ENCODE measurements at regions of chr2 and their contacts with region 1.

Region 1: GRCh38 chr2:200667413-200667812 is 81.6 kb downstream of the AOX1 start:
- DNase-seq: no peak
- ATAC-seq: no peak
- H3K4me3 ChIP-seq: no peak overlapping the region
- H3K4me3 Mint-ChIP-seq: no peak overlapping the region
- H3K27ac ChIP-seq: no peak overlapping the region
- H3K27ac Mint-ChIP-seq: no peak overlapping the region
- H3K4me1 ChIP-seq: no peaks in the 10 kb centered on the region
- H3K4me1 Mint-ChIP-seq: no peaks in the 10 kb centered on the region
- H3K27me3 ChIP-seq: no peaks in the 10 kb centered on the region
- H3K27me3 Mint-ChIP-seq: no peaks in the 10 kb centered on the region
- CTCF ChIP-seq: no peak

Region 2: GRCh38 chr2:200749631-200750322 is 82.4 kb after region 1 on chr2:
- CTCF ChIA-PET with region 1: no interaction called
- POLR2A ChIA-PET with region 1: no interaction called
- intact Hi-C with region 1: loop called in 1 of 2 experiments (anchors 5 kb)
- DNase-seq: no peak
- ATAC-seq: no peak
- H3K4me3 ChIP-seq: no peak overlapping the region
- H3K4me3 Mint-ChIP-seq: no peak overlapping the region
- H3K27ac ChIP-seq: no peak overlapping the region
- H3K27ac Mint-ChIP-seq: no peak overlapping the region
- H3K4me1 ChIP-seq: no peaks in the 10 kb centered on the region
- H3K4me1 Mint-ChIP-seq: no peaks in the 10 kb centered on the region
- H3K27me3 ChIP-seq: no peaks in the 10 kb centered on the region
- H3K27me3 Mint-ChIP-seq: peaks cover 18% of the 10 kb centered on the region
- CTCF ChIP-seq: no peak

Measured in CD4-positive, alpha-beta T cell (primary cell).